ENCODE measurements at regions of chr15 and their contacts with region 1.

Region 1: GRCh38 chr15:89057504-89058133 is 30.6 kb upstream of the ABHD2 start:
- DNase-seq: peak; percentile 87
- H3K4me3 Mint-ChIP-seq: no peak overlapping the region
- H3K27ac Mint-ChIP-seq: no peak overlapping the region
- H3K4me1 Mint-ChIP-seq: peaks cover 7% of the 10 kb centered on the region
- H3K27me3 Mint-ChIP-seq: peaks cover 24% of the 10 kb centered on the region

Region 2: GRCh38 chr15:88904624-88905327 is 152.8 kb before region 1 on chr15:
- CTCF ChIA-PET with region 1: interaction called, 13 read pairs
- DNase-seq: peak; percentile 98
- H3K4me3 Mint-ChIP-seq: peak overlapping the region; percentile 42
- H3K27ac Mint-ChIP-seq: peak overlapping the region; percentile 94
- H3K4me1 Mint-ChIP-seq: peaks cover 43% of the 10 kb centered on the region
- H3K27me3 Mint-ChIP-seq: no peaks in the 10 kb centered on the region

Region 3: DNA sequence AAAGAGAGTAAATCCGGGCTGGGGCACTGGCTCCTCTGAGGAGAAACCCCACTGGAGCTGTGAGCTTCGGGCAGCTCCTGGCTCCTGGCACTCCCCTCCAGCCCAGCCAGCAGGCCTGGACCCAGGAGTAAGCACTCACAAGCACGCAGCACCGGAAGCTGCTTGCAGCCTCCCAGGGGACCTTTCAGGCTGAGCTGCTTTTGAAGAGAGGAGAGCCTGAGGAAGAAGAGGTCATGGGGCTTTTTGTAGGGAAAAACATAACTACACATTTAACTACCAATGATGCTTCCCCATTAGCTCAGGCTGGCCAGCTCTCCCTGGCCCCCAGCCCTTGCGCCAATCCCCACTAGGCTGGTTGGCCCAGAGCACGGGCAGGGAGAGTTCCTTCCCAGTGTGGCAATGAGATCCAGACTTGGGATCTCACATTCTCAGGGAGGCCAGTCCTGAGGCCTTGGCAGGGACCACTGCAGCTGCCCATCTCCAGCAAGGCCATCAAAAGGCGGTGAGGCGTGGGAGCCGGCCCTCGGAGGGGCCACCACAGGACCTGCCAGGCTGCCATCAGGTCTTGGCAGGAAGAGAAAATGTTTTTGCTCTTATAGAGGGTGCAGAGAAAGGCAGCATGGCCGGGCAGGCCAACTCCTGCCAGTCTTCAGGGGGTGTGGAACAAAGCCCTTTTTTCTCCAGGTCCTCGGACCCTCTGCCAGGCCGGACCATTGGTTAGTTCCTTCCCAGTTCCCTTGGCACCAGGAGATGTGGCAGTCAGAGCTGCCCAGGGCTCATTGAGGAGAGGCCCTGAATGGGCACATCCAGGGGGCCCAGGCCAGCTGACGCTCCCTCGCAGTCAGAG is 103.0 kb before region 1 on chr15:
- CTCF ChIA-PET with region 1: no interaction called
- DNase-seq: no peak
- H3K4me3 Mint-ChIP-seq: no peak overlapping the region
- H3K27ac Mint-ChIP-seq: no peak overlapping the region
- H3K4me1 Mint-ChIP-seq: no peaks in the 10 kb centered on the region
- H3K27me3 Mint-ChIP-seq: peaks cover 17% of the 10 kb centered on the region

Region 4: GRCh38 chr15:89087830-89088604 is 30.4 kb after region 1 on chr15 and contains the start of gene ABHD2:
- CTCF ChIA-PET with region 1: interaction called, 35 read pairs
- DNase-seq: peak; percentile 98
- H3K4me3 Mint-ChIP-seq: no peak within 1 kb of the TSS
- H3K27ac Mint-ChIP-seq: peak within 1 kb of the TSS; percentile 78
- H3K4me1 Mint-ChIP-seq: peaks cover 35% of the 10 kb centered on the region
- H3K27me3 Mint-ChIP-seq: peaks cover 3% of the 10 kb centered on the region

Region 5: GRCh38 chr15:89171136-89172072 is 113.8 kb after region 1 on chr15:
- CTCF ChIA-PET with region 1: interaction called, 147 read pairs
- DNase-seq: peak; percentile 44
- H3K4me3 Mint-ChIP-seq: no peak overlapping the region
- H3K27ac Mint-ChIP-seq: no peak overlapping the region
- H3K4me1 Mint-ChIP-seq: peaks cover 11% of the 10 kb centered on the region
- H3K27me3 Mint-ChIP-seq: no peaks in the 10 kb centered on the region

Region 6: DNA sequence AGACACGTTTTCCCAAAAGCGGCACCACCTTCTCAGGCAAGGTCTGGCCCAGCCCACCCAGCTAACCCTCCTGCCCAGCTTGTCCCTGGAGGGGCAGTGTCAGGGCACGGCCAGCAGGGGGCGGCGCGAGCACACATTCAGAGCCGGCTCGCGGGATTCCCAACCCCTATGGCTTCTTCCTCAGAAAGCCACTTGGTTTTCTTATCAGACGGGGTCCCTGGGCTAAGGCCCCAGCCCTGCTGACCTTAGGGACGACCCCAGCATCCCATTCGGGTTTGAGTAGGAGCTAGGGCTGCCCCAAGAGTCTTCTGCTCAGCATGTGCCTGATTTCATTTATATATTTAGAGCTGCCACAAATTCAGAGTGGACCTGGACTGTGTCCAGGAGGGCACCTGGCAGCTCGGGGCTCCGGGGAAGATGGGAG is 149.3 kb after region 1 on chr15:
- CTCF ChIA-PET with region 1: interaction called, 19 read pairs
- DNase-seq: peak; percentile 75
- H3K4me3 Mint-ChIP-seq: no peak overlapping the region
- H3K27ac Mint-ChIP-seq: no peak overlapping the region
- H3K4me1 Mint-ChIP-seq: peaks cover 31% of the 10 kb centered on the region
- H3K27me3 Mint-ChIP-seq: peaks cover 20% of the 10 kb centered on the region

Region 7: GRCh38 chr15:89317186-89317720 is 259.6 kb after region 1 on chr15:
- CTCF ChIA-PET with region 1: no interaction called
- DNase-seq: no peak
- H3K4me3 Mint-ChIP-seq: no peak overlapping the region
- H3K27ac Mint-ChIP-seq: peak overlapping the region; percentile 46
- H3K4me1 Mint-ChIP-seq: peaks cover 13% of the 10 kb centered on the region
- H3K27me3 Mint-ChIP-seq: no peaks in the 10 kb centered on the region